Left lung (tissue), 14 donors: ENCODE measurements at regions of chr4 and their contacts with region 1.

Region 1: GRCh38 chr4:158809611-158810486 is 41.0 kb downstream of the FNIP2 start:
- DNase-seq: peak in 1 of 4 donors; percentile 65
- ATAC-seq: peak; percentile 73
- H3K4me3 ChIP-seq: peak overlapping the region in 1 of 2 donors; percentile 6
- H3K27ac ChIP-seq: peak overlapping the region; percentile 80 to 85
- H3K4me1 ChIP-seq: peaks cover 27 to 95% of the 10 kb centered on the region in 2 donors
- H3K27me3 ChIP-seq: no peaks in the 10 kb centered on the region
- CTCF ChIP-seq: no peak

Region 2: GRCh38 chr4:158778156-158778711 is 31.6 kb before region 1 on chr4:
- intact Hi-C with region 1: loop called in 1 of 2 experiments (anchors 5 kb)
- DNase-seq: no peak
- ATAC-seq: peak; percentile 46
- H3K4me3 ChIP-seq: no peak overlapping the region
- H3K27ac ChIP-seq: peak overlapping the region; percentile 20 to 24
- H3K4me1 ChIP-seq: peaks cover 28 to 77% of the 10 kb centered on the region in 2 donors
- H3K27me3 ChIP-seq: no peaks in the 10 kb centered on the region
- CTCF ChIP-seq: no peak